ENCODE measurements at regions of chr14 and their contacts with region 1.

Region 1: DNA sequence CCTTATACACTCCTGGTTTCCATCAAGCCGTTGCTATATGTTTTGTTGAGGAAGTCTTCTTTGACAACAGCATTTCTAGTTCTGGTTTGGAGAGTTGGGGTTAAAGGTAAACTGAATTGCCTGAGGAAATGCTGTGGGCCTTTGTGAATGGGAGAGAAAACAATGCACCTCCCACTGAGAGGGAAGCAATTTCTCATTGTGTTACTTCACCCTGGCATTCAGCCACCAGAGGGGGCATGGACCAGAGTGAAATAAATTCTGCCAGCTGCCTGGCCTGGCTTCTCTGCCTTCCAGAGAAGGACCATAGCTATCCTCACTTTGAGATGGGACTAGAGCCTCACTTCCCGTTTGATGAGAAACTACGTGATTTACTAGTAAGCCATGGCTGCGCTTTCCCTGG is 475.3 kb downstream of the EGLN3 start:
- DNase-seq: no peak
- ATAC-seq: no peak
- H3K4me3 Mint-ChIP-seq: no peak overlapping the region
- H3K27ac Mint-ChIP-seq: no peak overlapping the region
- H3K4me1 Mint-ChIP-seq: no peaks in the 10 kb centered on the region
- H3K27me3 Mint-ChIP-seq: no peaks in the 10 kb centered on the region
- CTCF ChIP-seq: no peak

Region 2: GRCh38 chr14:33499687-33500086 is 24.1 kb after region 1 on chr14:
- CTCF ChIA-PET with region 1: no interaction called
- POLR2A ChIA-PET with region 1: no interaction called
- intact Hi-C with region 1: loop called (anchors 1 kb)
- DNase-seq: no peak
- ATAC-seq: no peak
- H3K4me3 Mint-ChIP-seq: no peak overlapping the region
- H3K27ac Mint-ChIP-seq: no peak overlapping the region
- H3K4me1 Mint-ChIP-seq: no peaks in the 10 kb centered on the region
- H3K27me3 Mint-ChIP-seq: no peaks in the 10 kb centered on the region
- CTCF ChIP-seq: no peak

Region 3: GRCh38 chr14:33792720-33793368 is 317.2 kb after region 1 on chr14:
- CTCF ChIA-PET with region 1: interaction called, 8 read pairs
- POLR2A ChIA-PET with region 1: no interaction called
- intact Hi-C with region 1: loop called (anchors 5 kb)
- DNase-seq: peak; percentile 30
- ATAC-seq: no peak
- H3K4me3 Mint-ChIP-seq: no peak overlapping the region
- H3K27ac Mint-ChIP-seq: no peak overlapping the region
- H3K4me1 Mint-ChIP-seq: peaks cover 6% of the 10 kb centered on the region
- H3K27me3 Mint-ChIP-seq: peaks cover 27% of the 10 kb centered on the region
- CTCF ChIP-seq: peak; percentile 49

Measured in activated B cell treated with CpG ODN at 0.5 μM for 24 hours (primary cell).